Spleen (tissue), 13 donors: ENCODE measurements at regions of chr4 and their contacts with region 1.

Region 1: GRCh38 chr4:6806924-6807636 is 24.6 kb downstream of the KIAA0232 start:
- DNase-seq: no peak
- H3K4me3 ChIP-seq: peak overlapping the region in 1 of 8 donors; percentile 55
- H3K27ac ChIP-seq: peak overlapping the region in 7 of 8 donors; percentile 78 to 92 (median 87)
- H3K4me1 ChIP-seq: peaks cover 0 to 78% (median 33%) of the 10 kb centered on the region in 6 donors
- H3K27me3 ChIP-seq: no peaks in the 10 kb centered on the region
- CTCF ChIP-seq: no peak
- POLR2A ChIP-seq: no peak

Region 2: DNA sequence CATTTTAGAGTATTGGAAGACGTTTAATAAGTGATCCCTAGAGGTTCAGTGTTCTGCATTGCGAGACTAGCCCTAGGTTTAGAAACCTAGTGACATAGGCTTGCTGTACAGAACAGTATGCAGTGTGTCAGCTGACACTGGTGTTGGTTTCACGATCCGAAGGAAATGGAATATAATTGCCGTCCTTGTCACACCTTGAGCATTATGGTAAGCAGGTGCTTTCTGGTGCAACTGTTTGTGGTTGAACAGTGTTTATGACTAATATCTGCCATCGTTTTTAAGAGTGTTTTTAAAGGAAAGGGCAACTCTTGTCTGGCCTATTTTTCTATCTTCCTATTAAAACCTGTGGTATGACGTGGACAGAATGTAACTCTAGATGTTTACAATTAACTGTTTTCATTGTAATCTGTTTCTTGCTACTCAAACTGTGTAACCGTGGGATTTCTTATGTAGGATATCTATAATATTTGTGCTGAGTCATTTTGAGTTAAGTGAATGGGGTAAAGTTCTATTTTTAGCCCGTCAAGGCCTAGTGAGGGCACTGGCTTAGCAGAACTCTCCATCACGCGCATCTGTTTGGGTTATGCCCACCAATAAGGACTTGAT is 48.7 kb after region 1 on chr4:
- intact Hi-C with region 1: loop called (anchors 10 kb)
- DNase-seq: no peak
- H3K4me3 ChIP-seq: no peak overlapping the region
- H3K27ac ChIP-seq: peak overlapping the region in 5 of 8 donors; percentile 6 to 42 (median 36)
- H3K4me1 ChIP-seq: peaks cover 0 to 55% (median 27%) of the 10 kb centered on the region in 6 donors
- H3K27me3 ChIP-seq: no peaks in the 10 kb centered on the region
- CTCF ChIP-seq: no peak
- POLR2A ChIP-seq: no peak